ENCODE measurements at regions of chr11 and their contacts with region 1.

Region 1: GRCh38 chr11:74726547-74727182 is 4.6 kb downstream of the CHRDL2 start:
- DNase-seq: peak; percentile 75
- H3K4me3 ChIP-seq: no peak overlapping the region
- H3K27ac ChIP-seq: no peak overlapping the region
- H3K27me3 ChIP-seq: peaks cover 27% of the 10 kb centered on the region
- CTCF ChIP-seq: peak; percentile 99

Region 2: DNA sequence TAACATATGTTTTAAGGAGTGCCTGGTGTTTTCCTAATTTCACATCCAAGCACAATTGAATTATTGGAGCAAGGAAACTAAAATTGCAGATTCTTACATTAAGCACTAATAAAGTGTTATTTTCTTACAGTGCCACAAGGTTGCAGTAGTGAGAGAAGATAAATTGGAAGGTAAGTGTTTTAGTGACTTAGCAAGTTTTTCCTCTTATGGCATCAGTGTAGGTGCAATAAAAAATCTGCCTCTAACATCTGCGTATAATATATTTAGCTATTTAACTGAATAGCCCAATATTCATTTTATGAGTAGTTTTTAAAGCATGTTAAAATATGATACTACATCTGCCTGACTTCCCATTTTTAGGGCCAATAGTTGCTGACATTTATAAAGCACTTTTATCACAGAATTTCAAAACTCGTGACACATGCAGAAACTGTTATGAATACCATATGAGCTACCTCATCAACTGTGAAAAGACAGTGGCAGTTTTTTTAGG is 115.2 kb before region 1 on chr11:
- CTCF ChIA-PET with region 1: interaction called, 18 read pairs
- POLR2A ChIA-PET with region 1: interaction called, 10 read pairs
- DNase-seq: peak; percentile 54
- H3K4me3 ChIP-seq: no peak overlapping the region
- H3K27ac ChIP-seq: no peak overlapping the region
- H3K27me3 ChIP-seq: no peaks in the 10 kb centered on the region
- CTCF ChIP-seq: peak; percentile 58

Region 3: DNA sequence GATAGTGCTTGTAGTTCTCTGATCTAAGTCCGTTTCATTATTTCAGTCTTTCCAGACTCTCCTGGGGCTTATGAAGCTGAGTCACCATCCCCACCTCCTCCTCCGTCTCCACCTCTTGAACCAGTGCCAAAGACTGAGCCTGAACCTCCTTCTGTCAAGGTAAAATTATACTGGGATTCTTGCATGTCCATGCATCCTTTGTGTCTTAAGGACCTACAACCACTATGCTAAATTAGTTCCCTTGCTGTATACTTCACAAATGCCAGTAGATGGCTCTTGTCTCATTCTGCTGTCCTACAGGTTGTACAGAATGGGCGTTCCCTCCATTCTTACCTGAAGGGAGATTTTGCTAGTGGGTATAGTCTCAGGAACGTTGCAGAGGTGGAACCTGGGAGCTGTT is 92.1 kb before region 1 on chr11:
- CTCF ChIA-PET with region 1: interaction called, 11 read pairs
- POLR2A ChIA-PET with region 1: no interaction called
- DNase-seq: no peak
- H3K4me3 ChIP-seq: no peak overlapping the region
- H3K27ac ChIP-seq: no peak overlapping the region
- H3K27me3 ChIP-seq: no peaks in the 10 kb centered on the region
- CTCF ChIP-seq: peak; percentile 44

Region 4: DNA sequence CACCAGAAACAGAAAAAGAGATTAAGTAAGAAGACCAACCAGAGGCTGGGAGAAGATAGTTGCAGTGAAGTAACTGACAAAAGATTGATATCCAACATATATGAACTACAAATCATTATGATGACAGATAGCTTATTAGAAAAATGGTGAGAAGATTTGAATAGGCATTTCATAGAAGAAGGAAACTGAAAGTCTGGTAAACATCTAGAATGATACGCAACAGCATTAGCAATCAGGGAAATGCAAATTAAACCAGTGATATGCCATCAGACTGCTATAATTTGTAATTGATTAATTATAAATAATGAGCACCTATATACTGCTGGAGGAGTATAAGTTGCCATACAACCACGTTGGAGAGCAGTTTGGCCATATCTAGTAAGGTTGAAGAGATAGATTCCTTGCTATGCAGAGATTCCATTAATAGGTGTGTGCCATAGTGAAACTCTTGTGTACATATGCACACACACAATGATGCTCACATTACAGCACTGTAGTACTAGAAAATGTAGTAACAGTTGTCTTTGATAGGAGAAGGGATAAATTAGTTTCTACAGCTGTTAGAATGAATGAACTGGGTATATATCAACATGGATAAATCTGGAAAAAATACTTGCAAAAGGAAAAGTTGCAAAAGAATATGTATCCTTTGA is 42.5 kb after region 1 on chr11:
- CTCF ChIA-PET with region 1: no interaction called
- POLR2A ChIA-PET with region 1: no interaction called
- DNase-seq: no peak
- H3K4me3 ChIP-seq: no peak overlapping the region
- H3K27ac ChIP-seq: no peak overlapping the region
- H3K27me3 ChIP-seq: no peaks in the 10 kb centered on the region
- CTCF ChIP-seq: no peak

Measured in AG04450 (cell line).